H1 (cell line): ENCODE measurements at regions of chr14 and their contacts with region 1.

Region 1: GRCh38 chr14:75307700-75308379 is 29.2 kb downstream of the FOS start:
- DNase-seq: peak; percentile 75 to 96
- H3K4me3 ChIP-seq: no peak overlapping the region
- H3K27ac ChIP-seq: no peak overlapping the region
- H3K4me1 ChIP-seq: peaks cover 0 to 6% (median 5%) of the 10 kb centered on the region in 4 experiments; a peak in 5 of 7 replicates
- H3K27me3 ChIP-seq: no peaks in the 10 kb centered on the region
- CTCF ChIP-seq: peak; percentile 87 to 97 (median 95)
- EP300 ChIP-seq: no peak
- POLR2A ChIP-seq: no peak
- RAD21 ChIP-seq: peak; percentile 96

Region 2: DNA sequence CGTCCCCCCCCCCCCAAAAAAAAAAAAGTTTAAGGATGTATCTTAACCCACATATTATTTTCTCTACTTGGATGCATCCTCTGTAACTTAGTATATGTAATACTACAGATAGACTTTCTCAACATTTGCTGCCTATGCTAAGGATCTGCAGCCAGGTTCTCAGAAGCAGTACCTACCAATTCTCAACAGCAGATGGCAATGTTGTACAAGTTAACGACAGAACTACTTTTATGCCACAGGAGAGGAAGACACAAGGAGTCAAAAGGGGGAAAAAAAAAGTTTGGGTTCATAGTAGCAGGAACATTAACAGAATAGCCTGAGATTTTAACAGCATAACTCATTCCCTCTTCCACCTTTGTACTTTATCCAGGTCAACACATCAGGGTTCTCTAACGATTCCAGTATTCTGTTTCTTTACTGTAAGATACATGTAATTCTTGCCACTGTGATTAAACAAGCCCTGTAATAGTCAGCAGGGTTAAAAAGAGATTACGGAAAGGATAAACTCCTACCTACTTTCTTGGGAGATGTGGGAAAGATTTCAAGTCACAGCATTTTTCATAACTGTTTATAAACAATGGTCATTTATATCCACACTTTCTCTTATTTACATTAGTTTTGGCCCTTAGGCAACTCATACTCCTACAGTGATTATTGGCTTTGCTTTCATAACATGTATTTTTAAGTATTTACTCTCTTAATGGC is 175.3 kb before region 1 on chr14:
- CTCF ChIA-PET with region 1: interaction called, 105 read pairs
- POLR2A ChIA-PET with region 1: interaction called, 3 read pairs
- DNase-seq: peak in 1 of 2 experiments; percentile 66
- H3K4me3 ChIP-seq: no peak overlapping the region
- H3K27ac ChIP-seq: no peak overlapping the region
- H3K4me1 ChIP-seq: peaks cover 0 to 2% (median 0%) of the 10 kb centered on the region in 4 experiments; a peak in 2 of 7 replicates
- H3K27me3 ChIP-seq: no peaks in the 10 kb centered on the region
- CTCF ChIP-seq: peak in 2 of 3 experiments; percentile 76 to 77; a peak in 3 of 4 replicates
- EP300 ChIP-seq: no peak
- POLR2A ChIP-seq: no peak
- RAD21 ChIP-seq: peak; percentile 89 to 92

Region 3: GRCh38 chr14:75293920-75294642 is 13.8 kb before region 1 on chr14:
- CTCF ChIA-PET with region 1: interaction called, 40 read pairs
- POLR2A ChIA-PET with region 1: no interaction called
- DNase-seq: peak in 1 of 2 experiments; percentile 94
- H3K4me3 ChIP-seq: peak overlapping the region; percentile 61 to 87 (median 75)
- H3K27ac ChIP-seq: peak overlapping the region; percentile 98
- H3K4me1 ChIP-seq: peaks cover 3 to 12% (median 9%) of the 10 kb centered on the region in 4 experiments
- H3K27me3 ChIP-seq: no peaks in the 10 kb centered on the region
- CTCF ChIP-seq: 0 out of 4 replicates have a peak, but pooled peaks of 1 of the 3 experiments have one; percentile 0
- EP300 ChIP-seq: peak in 1 of 2 experiments; percentile 89; a peak in 1 of 3 replicates
- POLR2A ChIP-seq: peak; percentile 47 to 80
- RAD21 ChIP-seq: peak in 1 of 2 experiments; percentile 14; a peak in 1 of 4 replicates

Region 4: GRCh38 chr14:75467763-75468420 is 160.1 kb after region 1 on chr14:
- CTCF ChIA-PET with region 1: interaction called, 13 read pairs
- POLR2A ChIA-PET with region 1: no interaction called
- DNase-seq: no peak
- H3K4me3 ChIP-seq: no peak overlapping the region
- H3K27ac ChIP-seq: no peak overlapping the region
- H3K4me1 ChIP-seq: peaks cover 0 to 4% (median 2%) of the 10 kb centered on the region in 4 experiments; a peak in 2 of 7 replicates
- H3K27me3 ChIP-seq: 0 out of 7 replicates have a peak, but pooled peaks cover 0 to 2% (median 0%) of the 10 kb centered on the region in 4 experiments
- CTCF ChIP-seq: no peak
- EP300 ChIP-seq: no peak
- POLR2A ChIP-seq: no peak
- RAD21 ChIP-seq: 0 out of 4 replicates have a peak, but pooled peaks of 1 of the 2 experiments have one; percentile 11

Region 5: DNA sequence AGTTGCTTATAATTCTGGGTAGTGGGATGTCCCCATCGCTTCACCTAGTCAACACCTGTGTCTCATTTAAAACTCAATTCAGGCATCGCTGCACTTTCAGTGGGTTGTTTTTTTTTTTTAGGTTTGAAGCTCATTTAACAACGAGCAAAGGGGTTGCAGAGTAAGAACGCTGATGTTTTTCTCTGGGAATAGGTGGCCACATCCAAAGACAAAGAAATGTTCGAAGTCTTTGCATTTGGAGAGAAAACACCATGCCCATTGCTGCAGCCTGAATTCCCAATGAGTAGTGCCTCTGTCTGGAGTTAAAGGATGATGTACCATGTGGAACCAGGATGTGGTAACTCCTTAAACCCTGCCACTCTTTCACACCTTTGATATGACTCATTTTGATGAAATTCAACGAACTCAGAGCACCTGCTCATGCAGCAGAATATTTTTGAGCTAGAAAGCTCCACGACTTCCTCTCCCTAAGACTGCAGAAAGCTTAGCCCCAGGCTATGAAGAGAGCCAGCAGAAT is 179.4 kb after region 1 on chr14:
- CTCF ChIA-PET with region 1: interaction called, 184 read pairs
- POLR2A ChIA-PET with region 1: no interaction called
- DNase-seq: peak in 1 of 2 experiments; percentile 31
- H3K4me3 ChIP-seq: no peak overlapping the region
- H3K27ac ChIP-seq: no peak overlapping the region
- H3K4me1 ChIP-seq: no peaks in the 10 kb centered on the region
- H3K27me3 ChIP-seq: 0 out of 7 replicates have a peak, but pooled peaks cover 0 to 2% (median 0%) of the 10 kb centered on the region in 4 experiments
- CTCF ChIP-seq: no peak
- EP300 ChIP-seq: no peak
- POLR2A ChIP-seq: no peak
- RAD21 ChIP-seq: no peak